HepG2 (cell line): ENCODE measurements at regions of chr10 and their contacts with region 1.

Region 1: DNA sequence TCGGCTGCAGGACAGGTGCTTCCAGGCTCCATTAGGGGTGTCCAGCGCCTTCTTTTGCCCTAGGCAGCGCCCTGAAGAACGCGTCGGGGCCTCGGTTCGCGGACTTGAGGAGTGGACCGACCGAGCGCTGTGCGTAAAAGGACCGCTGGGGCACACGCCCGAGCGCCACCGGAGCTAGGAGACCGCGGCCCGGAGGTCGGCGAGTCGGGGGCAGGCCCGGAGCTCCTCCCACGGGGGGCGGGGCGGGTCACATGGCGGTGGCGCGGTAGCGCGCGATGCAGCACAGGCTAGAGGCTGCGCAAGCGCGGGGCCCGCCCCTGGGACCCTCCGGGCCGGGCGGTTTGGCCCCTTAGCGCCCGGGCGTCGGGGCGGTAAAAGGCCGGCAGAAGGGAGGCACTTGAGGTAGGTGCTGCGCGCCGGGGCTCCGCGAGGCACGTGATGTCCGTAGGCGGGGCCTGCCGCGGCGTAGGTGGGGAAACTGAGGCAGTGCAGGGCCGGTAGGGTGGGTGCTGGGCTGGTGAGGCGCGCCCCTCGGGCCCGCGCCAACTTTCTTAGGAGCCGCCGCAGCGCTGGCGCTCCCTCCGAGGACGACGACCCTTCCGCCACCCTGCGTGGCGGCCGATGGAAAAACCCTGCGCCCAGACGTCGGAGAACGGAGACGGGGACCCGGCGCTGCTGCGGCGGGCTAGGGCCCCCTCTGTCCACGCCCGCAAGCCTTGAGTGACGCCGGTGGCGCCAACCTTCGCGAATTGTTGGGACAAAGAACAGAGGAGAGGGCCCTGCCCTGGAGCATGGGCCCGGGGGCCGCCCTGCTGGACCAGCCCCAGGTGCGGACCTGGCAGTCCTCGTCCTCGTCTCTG is at the start of gene PRXL2A:
- DNase-seq: peak; percentile 74
- ATAC-seq: peak; percentile 88
- H3K4me3 ChIP-seq: peak within 1 kb of the TSS; percentile 76 to 86 (median 78)
- H3K27ac ChIP-seq: peak within 1 kb of the TSS; percentile 99
- H3K4me1 ChIP-seq: peaks cover 67% of the 10 kb centered on the region
- H3K27me3 ChIP-seq: no peaks in the 10 kb centered on the region; a peak in 1 of 5 replicates
- CTCF ChIP-seq: peak; percentile 15; the same call in 1 of the 2 replicates
- EP300 ChIP-seq: peak in 1 of 2 experiments; percentile 52; a peak in 1 of 4 replicates
- POLR2A ChIP-seq: peak; percentile 81 to 98
- RAD21 ChIP-seq: peak; percentile 20
- total RNA-seq, gene PRXL2A: 57.4 and 79.9 TPM in 2 replicates

Region 2: GRCh38 chr10:80280973-80281691 is 127.3 kb before region 1 on chr10:
- CTCF ChIA-PET with region 1: no interaction called
- POLR2A ChIA-PET with region 1: interaction called, 16 read pairs
- in situ Hi-C with region 1: no loop called
- intact Hi-C with region 1: no loop called
- DNase-seq: no peak
- ATAC-seq: peak; percentile 9; the same call in 2 of the 3 replicates
- H3K4me3 ChIP-seq: no peak overlapping the region
- H3K27ac ChIP-seq: peak overlapping the region; percentile 83
- H3K4me1 ChIP-seq: peaks cover 60% of the 10 kb centered on the region
- H3K27me3 ChIP-seq: no peaks in the 10 kb centered on the region
- CTCF ChIP-seq: no peak
- EP300 ChIP-seq: no peak
- POLR2A ChIP-seq: no peak
- RAD21 ChIP-seq: no peak

Region 3: DNA sequence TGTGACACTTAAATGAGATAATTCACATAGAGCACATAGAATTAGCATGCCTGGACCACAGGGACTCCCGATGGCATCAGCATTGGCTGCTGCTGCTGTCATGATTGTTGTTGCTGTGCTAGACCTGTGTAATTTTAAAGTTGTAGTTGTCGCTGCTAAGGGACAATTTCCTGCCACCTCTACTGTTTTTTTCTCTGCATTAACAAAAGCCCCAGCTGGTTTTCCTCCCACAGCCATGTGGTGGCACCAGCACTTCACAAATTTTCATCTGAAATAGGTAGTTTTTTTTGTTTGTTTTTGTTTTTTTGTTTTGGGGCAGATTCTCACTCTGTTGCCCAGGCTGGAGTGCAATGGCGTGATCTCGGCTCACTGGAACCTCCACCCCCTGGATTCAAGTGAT is 25.5 kb before region 1 on chr10:
- CTCF ChIA-PET with region 1: no interaction called
- POLR2A ChIA-PET with region 1: interaction called, 18 read pairs
- in situ Hi-C with region 1: no loop called
- intact Hi-C with region 1: no loop called
- DNase-seq: peak; percentile 40
- ATAC-seq: peak; percentile 52; the same call in 2 of the 3 replicates
- H3K4me3 ChIP-seq: no peak overlapping the region
- H3K27ac ChIP-seq: no peak overlapping the region
- H3K4me1 ChIP-seq: peaks cover 10% of the 10 kb centered on the region
- H3K27me3 ChIP-seq: no peaks in the 10 kb centered on the region
- CTCF ChIP-seq: peak; percentile 77
- EP300 ChIP-seq: no peak
- POLR2A ChIP-seq: no peak
- RAD21 ChIP-seq: peak; percentile 78

Region 4: DNA sequence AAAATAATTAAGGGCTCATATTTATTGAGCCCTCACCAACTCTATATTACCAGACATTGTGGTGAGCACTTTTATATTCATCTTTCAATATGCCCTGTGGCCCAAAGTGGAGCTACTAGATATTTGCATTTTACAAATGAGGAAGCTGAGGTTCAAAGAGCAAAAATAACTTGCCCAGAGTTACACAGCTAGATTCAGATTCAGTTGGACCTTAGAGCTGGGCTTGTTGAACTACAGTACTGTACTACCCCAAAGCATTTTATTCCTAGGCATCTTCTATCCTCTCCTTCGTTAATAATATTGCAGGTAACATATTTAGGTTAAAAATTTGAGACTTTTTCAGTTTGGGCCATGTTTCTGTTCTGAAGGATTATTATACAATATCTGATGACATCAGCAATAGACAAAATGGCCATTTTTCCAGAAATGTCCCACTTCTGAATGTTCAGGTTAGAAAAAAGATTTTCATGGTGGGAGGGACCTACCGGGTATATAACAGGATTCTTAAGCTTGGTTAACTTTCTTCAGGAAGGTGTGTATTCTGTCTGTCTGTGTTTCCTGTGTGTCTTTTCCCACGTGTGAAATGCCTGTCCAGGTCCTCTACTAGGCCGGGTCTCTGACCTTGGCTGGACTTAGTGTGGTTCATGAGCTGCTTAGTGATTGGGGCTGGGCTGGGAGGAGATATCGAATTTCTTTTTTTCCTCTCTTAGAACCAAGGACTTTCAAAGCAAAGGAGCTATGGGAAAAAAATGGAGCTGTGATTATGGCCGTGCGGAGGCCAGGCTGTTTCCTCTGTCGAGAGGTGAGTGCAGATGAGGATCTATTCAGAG is 13.4 kb after region 1 on chr10:
- CTCF ChIA-PET with region 1: no interaction called
- POLR2A ChIA-PET with region 1: interaction called, 35 read pairs
- in situ Hi-C with region 1: no loop called
- intact Hi-C with region 1: no loop called
- DNase-seq: no peak
- ATAC-seq: peak; percentile 48
- H3K4me3 ChIP-seq: no peak overlapping the region
- H3K27ac ChIP-seq: peak overlapping the region; percentile 21
- H3K4me1 ChIP-seq: peaks cover 16% of the 10 kb centered on the region
- H3K27me3 ChIP-seq: no peaks in the 10 kb centered on the region
- CTCF ChIP-seq: no peak
- EP300 ChIP-seq: no peak
- POLR2A ChIP-seq: no peak
- RAD21 ChIP-seq: no peak

Region 5: DNA sequence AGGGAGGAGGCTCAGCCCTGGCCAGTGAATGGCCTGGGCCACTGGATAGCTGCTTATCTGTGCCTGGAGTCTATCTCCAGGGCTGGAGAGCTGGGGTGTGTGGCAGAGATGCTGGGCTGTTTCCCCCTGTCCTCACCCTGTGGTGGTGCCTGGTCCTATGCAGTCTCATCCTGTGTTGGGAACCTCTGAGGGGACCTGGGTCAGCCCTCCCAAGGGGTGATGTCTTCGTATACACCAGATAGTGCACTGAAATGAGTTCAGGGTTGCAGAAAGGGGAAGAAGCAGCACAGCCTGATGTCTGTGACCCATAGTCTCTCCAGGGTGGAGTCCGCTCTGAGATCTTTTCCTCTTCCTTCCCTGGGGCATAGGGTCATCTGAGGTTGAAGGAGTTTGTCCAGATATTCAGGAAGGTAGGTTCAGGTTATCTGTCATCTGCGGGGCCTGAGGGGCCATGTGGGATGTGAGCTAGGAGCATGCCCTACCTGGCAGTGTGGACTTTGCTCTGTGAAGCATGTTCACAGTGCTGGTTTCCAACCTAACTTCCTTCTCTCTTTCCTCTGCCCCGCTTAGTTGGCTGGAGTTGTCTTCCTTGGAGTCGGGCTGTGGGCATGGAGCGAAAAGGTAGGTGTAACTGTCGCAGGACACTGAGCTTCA is 95.8 kb after region 1 on chr10:
- CTCF ChIA-PET with region 1: no interaction called
- POLR2A ChIA-PET with region 1: interaction called, 39 read pairs
- in situ Hi-C with region 1: no loop called
- intact Hi-C with region 1: no loop called
- DNase-seq: no peak
- ATAC-seq: peak; percentile 24
- H3K4me3 ChIP-seq: peak overlapping the region in 1 of 3 experiments; percentile 7; a peak in 1 of 6 replicates
- H3K27ac ChIP-seq: peak overlapping the region; percentile 58
- H3K4me1 ChIP-seq: peaks cover 84% of the 10 kb centered on the region
- H3K27me3 ChIP-seq: no peaks in the 10 kb centered on the region
- CTCF ChIP-seq: no peak
- EP300 ChIP-seq: no peak
- POLR2A ChIP-seq: no peak
- RAD21 ChIP-seq: no peak